GM10248 (cell line): ENCODE measurements at regions of chr1 and their contacts with region 1.

Region 1: DNA sequence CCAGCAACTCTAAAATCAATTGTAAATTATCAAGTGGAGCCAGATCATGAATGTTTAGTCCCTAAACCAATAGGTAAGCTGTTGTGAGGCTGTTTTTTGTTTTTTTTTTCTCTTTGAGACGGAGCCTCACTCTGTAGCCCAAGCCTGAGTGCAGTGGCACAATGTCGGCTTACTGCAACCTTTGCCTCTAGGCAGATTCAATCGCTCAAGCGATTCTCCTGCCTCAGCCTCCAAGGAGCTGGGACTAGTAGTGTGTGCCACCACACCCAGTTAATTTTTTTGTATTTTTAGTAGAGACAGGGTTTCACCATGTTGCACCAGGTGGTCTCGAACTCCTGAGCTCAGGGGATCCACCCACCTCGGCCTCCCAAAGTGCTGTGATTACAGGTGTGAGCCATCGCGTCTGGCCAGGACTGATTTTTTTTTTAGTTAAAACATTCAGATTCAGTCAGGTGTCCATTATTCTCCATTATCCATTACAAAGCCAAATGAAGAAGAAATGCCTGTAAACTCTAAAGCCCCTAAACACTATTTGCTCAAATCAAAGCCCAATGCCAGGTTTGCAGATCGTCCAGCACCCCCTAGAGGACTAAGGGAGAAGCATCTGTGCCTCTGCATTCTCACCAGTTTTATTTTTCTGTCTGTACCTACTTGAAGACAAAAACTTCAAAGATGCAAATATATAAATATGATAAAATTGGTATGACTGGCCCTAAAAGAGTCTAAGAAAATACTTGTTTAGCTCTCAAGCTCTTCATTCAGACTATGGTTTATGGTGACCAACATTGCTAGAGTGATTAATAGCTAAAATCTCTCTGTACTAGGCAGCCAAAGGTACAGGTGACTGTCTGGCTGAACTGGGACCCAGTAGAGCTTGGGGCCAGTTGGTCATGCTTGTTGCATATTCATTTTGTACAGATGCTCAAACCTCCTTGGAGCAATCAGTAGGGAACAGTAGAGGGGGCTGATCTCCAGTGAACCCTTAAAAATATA is 138.6 kb downstream of the SYT2 start:
- DNase-seq: peak; percentile 50
- CTCF ChIP-seq: peak; percentile 78

Region 2: GRCh38 chr1:202501281-202501680 is 70.4 kb before region 1 on chr1:
- CTCF ChIA-PET with region 1: interaction called, 16 read pairs
- POLR2A ChIA-PET with region 1: no interaction called
- DNase-seq: peak; percentile 7
- CTCF ChIP-seq: peak; percentile 44

Region 3: GRCh38 chr1:202586018-202586821 is 14.6 kb after region 1 on chr1:
- CTCF ChIA-PET with region 1: interaction called, 39 read pairs
- POLR2A ChIA-PET with region 1: no interaction called
- DNase-seq: no peak
- CTCF ChIP-seq: no peak

Region 4: GRCh38 chr1:202649553-202650392 is 78.1 kb after region 1 on chr1:
- CTCF ChIA-PET with region 1: no interaction called
- POLR2A ChIA-PET with region 1: no interaction called
- DNase-seq: no peak
- CTCF ChIP-seq: no peak

Region 5: GRCh38 chr1:202680586-202681352 is 109.1 kb after region 1 on chr1:
- CTCF ChIA-PET with region 1: no interaction called
- POLR2A ChIA-PET with region 1: no interaction called
- DNase-seq: no peak
- CTCF ChIP-seq: no peak